ENCODE measurements at regions of chr19 and their contacts with region 1.

Region 1: GRCh38 chr19:43599635-43600295 is 3.4 kb downstream of the ZNF576 start:
- DNase-seq: no peak
- ATAC-seq: no peak
- H3K4me3 ChIP-seq: no peak overlapping the region
- H3K27ac ChIP-seq: no peak overlapping the region
- H3K4me1 ChIP-seq: peaks cover 23% of the 10 kb centered on the region
- H3K27me3 ChIP-seq: no peaks in the 10 kb centered on the region
- CTCF ChIP-seq: no peak
- POLR2A ChIP-seq: no peak

Region 2: GRCh38 chr19:43564800-43565199 is 35.0 kb before region 1 on chr19:
- intact Hi-C with region 1: loop called (anchors 5 kb)
- DNase-seq: no peak
- ATAC-seq: no peak
- H3K4me3 ChIP-seq: no peak overlapping the region
- H3K27ac ChIP-seq: no peak overlapping the region
- H3K4me1 ChIP-seq: no peaks in the 10 kb centered on the region
- H3K27me3 ChIP-seq: no peaks in the 10 kb centered on the region
- CTCF ChIP-seq: no peak
- POLR2A ChIP-seq: no peak

Region 3: GRCh38 chr19:43976732-43977131 is 377.0 kb after region 1 on chr19:
- intact Hi-C with region 1: no loop called
- DNase-seq: no peak
- ATAC-seq: no peak
- H3K4me3 ChIP-seq: no peak overlapping the region
- H3K27ac ChIP-seq: no peak overlapping the region
- H3K4me1 ChIP-seq: no peaks in the 10 kb centered on the region
- H3K27me3 ChIP-seq: no peaks in the 10 kb centered on the region
- CTCF ChIP-seq: no peak
- POLR2A ChIP-seq: no peak

Measured in body of pancreas (tissue), 4 donors.